ENCODE measurements at regions of chr1 and their contacts with region 1.

Region 1: DNA sequence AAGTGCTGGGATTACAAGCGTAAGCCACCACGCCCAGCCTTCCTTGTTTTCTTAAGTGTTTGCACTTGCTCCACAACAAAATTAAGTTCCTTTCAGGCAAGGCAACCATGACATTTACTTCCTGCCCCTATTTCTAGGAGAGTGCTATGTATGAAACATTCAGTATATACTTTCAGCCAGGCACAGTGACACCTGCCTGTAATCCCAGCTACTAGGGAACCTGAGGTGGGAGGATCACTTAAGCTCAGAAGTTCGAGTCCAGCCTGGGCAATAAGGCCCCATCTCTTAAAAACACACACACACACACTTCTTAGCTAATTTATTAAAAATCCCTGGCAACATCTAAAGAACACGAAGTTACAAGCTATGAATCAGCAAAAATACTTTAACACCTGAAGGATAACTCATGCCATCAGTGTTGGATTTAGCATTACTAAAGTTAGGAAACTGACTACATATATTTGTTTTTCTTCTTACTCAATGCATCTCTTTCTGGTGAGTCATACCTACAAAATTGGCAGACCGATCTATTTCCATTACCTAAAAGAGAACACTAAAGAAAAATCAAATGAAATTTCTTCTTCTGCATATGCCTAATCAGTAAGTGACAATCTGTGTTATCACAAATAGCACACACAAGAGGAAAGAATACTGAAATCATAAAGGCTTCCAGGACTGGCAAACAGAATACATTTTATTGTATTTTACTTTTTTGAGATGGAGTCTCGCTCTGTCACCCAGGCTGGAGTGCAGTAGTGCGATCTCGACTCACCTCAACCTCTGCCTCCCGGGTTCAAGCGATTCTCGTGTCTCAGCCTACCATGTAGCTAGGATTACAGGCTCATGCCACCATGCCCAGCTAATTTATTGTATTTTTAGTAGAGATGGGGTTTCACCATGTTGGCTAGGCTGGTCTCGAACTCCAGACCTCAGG is 41.5 kb downstream of the RNF115 start:
- DNase-seq: no peak
- ATAC-seq: peak; percentile 63
- H3K4me3 Mint-ChIP-seq: no peak overlapping the region
- H3K27ac Mint-ChIP-seq: no peak overlapping the region
- H3K4me1 Mint-ChIP-seq: peaks cover 32% of the 10 kb centered on the region
- H3K27me3 Mint-ChIP-seq: no peaks in the 10 kb centered on the region

Region 2: DNA sequence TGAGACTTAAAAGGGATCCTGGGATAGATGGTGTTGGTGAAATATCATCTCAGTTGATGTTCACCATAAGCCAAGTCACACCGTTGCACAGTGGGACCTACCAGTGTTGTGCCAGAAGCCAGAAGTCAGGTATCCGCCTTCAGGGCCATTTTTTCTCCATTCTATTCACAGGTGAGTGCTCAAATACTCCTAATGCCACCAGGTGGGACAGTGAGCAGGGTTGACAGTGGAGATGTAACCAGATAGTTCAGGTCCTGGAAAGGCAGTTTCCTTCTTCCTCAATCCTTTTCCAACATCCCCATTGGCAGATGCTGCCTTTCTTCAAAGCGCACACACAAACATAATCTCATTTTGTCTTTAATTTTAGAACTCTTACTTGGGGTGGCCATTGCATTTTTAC is 51.5 kb before region 1 on chr1:
- CTCF ChIA-PET with region 1: no interaction called
- POLR2A ChIA-PET with region 1: no interaction called
- intact Hi-C with region 1: loop called in 1 of 2 experiments (anchors 10 kb)
- DNase-seq: no peak
- ATAC-seq: no peak
- H3K4me3 Mint-ChIP-seq: no peak overlapping the region
- H3K27ac Mint-ChIP-seq: no peak overlapping the region
- H3K4me1 Mint-ChIP-seq: no peaks in the 10 kb centered on the region
- H3K27me3 Mint-ChIP-seq: no peaks in the 10 kb centered on the region

Region 3: DNA sequence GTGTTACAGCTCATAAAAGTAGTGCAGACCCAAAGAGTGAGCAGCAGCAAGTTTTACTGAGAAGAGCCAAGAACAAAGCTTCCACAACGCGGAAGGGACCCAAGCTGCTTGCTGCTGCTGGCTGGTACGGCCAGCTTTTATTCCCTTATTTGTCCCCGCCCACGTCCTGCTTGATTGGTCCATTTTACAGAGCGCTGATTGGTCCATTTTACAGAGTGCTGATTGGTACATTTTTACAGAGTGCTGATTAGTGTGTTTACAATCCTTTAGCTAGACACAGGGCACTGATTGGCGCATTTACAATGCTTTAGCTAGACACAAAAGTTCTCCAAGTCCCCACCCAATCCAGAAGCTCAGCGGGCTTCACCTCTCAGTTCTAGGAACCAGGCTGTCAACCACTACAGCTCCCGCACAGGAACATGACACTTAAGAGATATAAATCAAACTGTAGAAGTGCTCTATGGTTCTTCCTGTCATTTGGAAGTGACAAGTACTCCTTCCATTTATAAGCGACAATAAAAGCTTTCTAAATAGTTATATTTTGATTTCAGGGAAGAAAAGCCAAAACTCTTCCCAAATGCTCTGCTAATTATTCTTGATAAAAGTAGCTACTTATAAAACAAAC is 12.9 kb after region 1 on chr1:
- CTCF ChIA-PET with region 1: interaction called, 6 read pairs
- POLR2A ChIA-PET with region 1: interaction called, 13 read pairs
- intact Hi-C with region 1: no loop called
- DNase-seq: no peak
- ATAC-seq: no peak
- H3K4me3 Mint-ChIP-seq: no peak overlapping the region
- H3K27ac Mint-ChIP-seq: no peak overlapping the region
- H3K4me1 Mint-ChIP-seq: peaks cover 13% of the 10 kb centered on the region
- H3K27me3 Mint-ChIP-seq: no peaks in the 10 kb centered on the region

Region 4: DNA sequence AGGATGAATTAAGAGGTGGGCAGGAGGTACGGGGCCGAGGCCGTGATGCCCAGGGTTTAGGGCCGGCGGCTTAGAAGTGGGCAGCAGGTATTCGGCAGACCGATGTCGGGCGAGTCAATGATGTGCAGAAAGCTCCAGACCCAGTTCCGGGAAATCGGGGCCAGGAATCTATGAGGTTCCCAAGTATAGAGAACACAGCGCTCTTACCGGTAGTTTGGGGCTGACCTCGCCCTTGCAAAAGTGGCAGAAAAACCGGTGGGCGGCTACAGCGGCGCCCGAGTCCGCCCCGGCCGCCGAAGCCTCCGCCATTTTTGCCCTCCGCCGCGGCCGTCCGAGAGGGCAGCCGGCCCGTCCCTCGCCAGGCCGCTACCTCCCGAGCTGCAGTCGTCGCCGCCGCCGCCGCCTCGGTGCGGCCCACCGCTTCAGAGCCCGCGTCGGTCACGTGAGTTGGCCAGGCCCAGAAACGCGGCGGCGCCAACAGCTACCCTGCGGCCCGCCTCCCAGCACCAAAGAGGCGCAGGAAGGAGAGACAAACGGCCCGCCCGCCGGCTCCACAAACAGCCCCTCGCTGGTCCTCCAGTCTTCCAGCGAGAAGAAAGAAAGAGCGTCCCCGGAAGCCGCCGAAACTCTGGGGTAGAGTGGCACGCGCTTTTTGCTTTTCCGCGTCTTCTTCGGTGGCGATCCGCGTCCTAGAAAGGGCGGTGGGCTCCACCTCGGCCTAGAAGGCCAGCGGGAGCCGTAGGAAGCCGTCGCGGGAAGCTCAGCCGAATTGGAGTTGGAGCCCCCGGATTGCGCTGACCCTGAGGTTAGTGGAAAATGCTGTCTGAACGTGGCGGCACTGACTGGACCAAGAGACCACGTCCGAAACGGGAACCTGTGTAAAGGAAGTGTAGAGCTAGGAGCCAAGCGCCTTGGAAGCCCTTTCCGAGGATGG is 41.4 kb after region 1 on chr1 and contains the starts of genes POLR3C and RNF115:
- CTCF ChIA-PET with region 1: interaction called, 5 read pairs
- POLR2A ChIA-PET with region 1: no interaction called
- intact Hi-C with region 1: loop called in 1 of 2 experiments (anchors 5 kb)
- DNase-seq: peak; percentile 91
- ATAC-seq: peak; percentile 67
- H3K4me3 Mint-ChIP-seq: peak within 1 kb of the TSS; percentile 97
- H3K27ac Mint-ChIP-seq: peak within 1 kb of the TSS; percentile 98
- H3K4me1 Mint-ChIP-seq: peaks cover 44% of the 10 kb centered on the region
- H3K27me3 Mint-ChIP-seq: no peaks in the 10 kb centered on the region
- total RNA-seq, gene POLR3C: 34.2 to 42.6 TPM
- total RNA-seq, gene RNF115: 11.8 to 13.9 TPM

Measured in activated CD4-positive, alpha-beta T cell treated with anti-CD3 and anti-CD28 coated beads for 36 hours (primary cell).